ENCODE measurements at regions of chr4 and their contacts with region 1.

Region 1: GRCh38 chr4:55866973-55867574 is 13.6 kb downstream of the EXOC1 start:
- DNase-seq: peak in 5 of 9 experiments; percentile 14 to 74 (median 32)
- ATAC-seq: peak; percentile 87
- H3K4me3 ChIP-seq: no peak overlapping the region
- H3K4me3 Mint-ChIP-seq: no peak overlapping the region
- H3K27ac ChIP-seq: no peak overlapping the region
- H3K27ac Mint-ChIP-seq: no peak overlapping the region
- H3K4me1 ChIP-seq: no peaks in the 10 kb centered on the region
- H3K4me1 Mint-ChIP-seq: peaks cover 9% of the 10 kb centered on the region
- H3K27me3 ChIP-seq: no peaks in the 10 kb centered on the region
- H3K27me3 Mint-ChIP-seq: no peaks in the 10 kb centered on the region
- CTCF ChIP-seq: peak; percentile 92

Region 2: GRCh38 chr4:54971474-54971950 is 895.6 kb before region 1 on chr4:
- CTCF ChIA-PET with region 1: interaction called, 3 read pairs
- POLR2A ChIA-PET with region 1: no interaction called
- intact Hi-C with region 1: loop called in 1 of 2 experiments (anchors 10 kb)
- DNase-seq: peak in 2 of 9 experiments; percentile 21 to 44
- ATAC-seq: peak; percentile 51
- H3K4me3 ChIP-seq: no peak overlapping the region
- H3K4me3 Mint-ChIP-seq: no peak overlapping the region
- H3K27ac ChIP-seq: no peak overlapping the region
- H3K27ac Mint-ChIP-seq: no peak overlapping the region
- H3K4me1 ChIP-seq: no peaks in the 10 kb centered on the region
- H3K4me1 Mint-ChIP-seq: no peaks in the 10 kb centered on the region
- H3K27me3 ChIP-seq: no peaks in the 10 kb centered on the region
- H3K27me3 Mint-ChIP-seq: peaks cover 12% of the 10 kb centered on the region
- CTCF ChIP-seq: peak; percentile 63

Region 3: GRCh38 chr4:55312489-55313101 is 554.5 kb before region 1 on chr4:
- CTCF ChIA-PET with region 1: interaction called, 3 read pairs
- POLR2A ChIA-PET with region 1: no interaction called
- intact Hi-C with region 1: loop called (anchors 1 kb)
- DNase-seq: peak in 6 of 9 experiments; percentile 5 to 64 (median 33)
- ATAC-seq: peak; percentile 54
- H3K4me3 ChIP-seq: no peak overlapping the region
- H3K4me3 Mint-ChIP-seq: no peak overlapping the region
- H3K27ac ChIP-seq: no peak overlapping the region
- H3K27ac Mint-ChIP-seq: no peak overlapping the region
- H3K4me1 ChIP-seq: no peaks in the 10 kb centered on the region
- H3K4me1 Mint-ChIP-seq: no peaks in the 10 kb centered on the region
- H3K27me3 ChIP-seq: no peaks in the 10 kb centered on the region
- H3K27me3 Mint-ChIP-seq: peaks cover 3% of the 10 kb centered on the region
- CTCF ChIP-seq: peak; percentile 63

Region 4: DNA sequence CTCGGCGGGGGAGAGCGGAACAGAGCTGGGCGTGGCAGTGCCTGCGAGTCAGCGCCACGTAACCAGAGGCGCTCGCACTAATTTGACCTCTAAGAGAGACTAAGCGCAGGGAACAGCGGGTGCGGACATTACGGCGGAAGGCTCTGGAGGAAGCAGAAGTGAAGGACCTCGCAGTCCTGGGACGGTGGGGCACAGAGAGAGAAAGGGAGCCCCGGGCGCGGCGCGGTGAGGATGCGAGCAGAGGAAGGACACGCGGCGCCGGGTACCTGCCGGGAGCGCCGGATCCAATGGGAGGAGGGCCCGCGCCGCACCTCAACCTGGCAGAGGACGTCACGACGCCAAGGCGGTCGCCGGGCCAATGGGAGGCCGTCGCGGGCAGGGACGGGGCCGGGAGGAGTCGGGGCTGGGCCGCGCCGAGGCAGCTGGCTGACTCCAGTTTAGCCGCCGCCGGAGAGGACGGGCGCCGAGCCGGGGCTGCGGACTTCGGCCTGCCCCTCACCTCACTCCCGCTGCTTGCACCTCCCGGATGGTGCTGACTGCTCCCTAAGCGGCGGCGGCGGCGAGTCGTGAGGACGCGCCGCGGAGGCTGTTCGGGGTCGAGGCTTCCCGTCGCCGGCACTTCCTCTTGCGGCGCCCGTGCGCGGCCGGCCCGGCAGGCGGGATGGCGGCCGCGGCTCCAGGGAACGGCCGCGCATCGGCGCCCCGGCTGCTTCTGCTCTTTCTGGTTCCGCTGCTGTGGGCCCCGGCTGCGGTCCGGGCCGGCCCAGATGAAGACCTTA is 471.4 kb before region 1 on chr4 and contains the start of gene TMEM165:
- CTCF ChIA-PET with region 1: no interaction called
- POLR2A ChIA-PET with region 1: interaction called, 4 read pairs
- intact Hi-C with region 1: loop called in 1 of 2 experiments (anchors 2 kb)
- DNase-seq: peak; percentile 72 to 93 (median 86)
- ATAC-seq: peak; percentile 94
- H3K4me3 ChIP-seq: peak within 1 kb of the TSS; percentile 68 to 74
- H3K4me3 Mint-ChIP-seq: peak within 1 kb of the TSS; percentile 97
- H3K27ac ChIP-seq: peak within 1 kb of the TSS; percentile 83 to 93
- H3K27ac Mint-ChIP-seq: peak within 1 kb of the TSS; percentile 98
- H3K4me1 ChIP-seq: peaks cover 36% of the 10 kb centered on the region
- H3K4me1 Mint-ChIP-seq: peaks cover 38% of the 10 kb centered on the region
- H3K27me3 ChIP-seq: no peaks in the 10 kb centered on the region
- H3K27me3 Mint-ChIP-seq: no peaks in the 10 kb centered on the region
- CTCF ChIP-seq: peak; percentile 0
- total RNA-seq, gene TMEM165: 31.0 to 31.5 TPM

Region 5: GRCh38 chr4:55853484-55854046 is 13.5 kb before region 1 on chr4 and contains the start of gene EXOC1:
- CTCF ChIA-PET with region 1: interaction called, 11 read pairs
- POLR2A ChIA-PET with region 1: no interaction called
- intact Hi-C with region 1: loop called in 1 of 2 experiments (anchors 2 kb)
- DNase-seq: peak; percentile 90 to 98 (median 97)
- ATAC-seq: peak; percentile 96
- H3K4me3 ChIP-seq: peak within 1 kb of the TSS; percentile 96
- H3K4me3 Mint-ChIP-seq: peak within 1 kb of the TSS; percentile 36
- H3K27ac ChIP-seq: peak within 1 kb of the TSS; percentile 70 to 86
- H3K27ac Mint-ChIP-seq: peak within 1 kb of the TSS; percentile 64
- H3K4me1 ChIP-seq: peaks cover 40% of the 10 kb centered on the region
- H3K4me1 Mint-ChIP-seq: peaks cover 38% of the 10 kb centered on the region
- H3K27me3 ChIP-seq: no peaks in the 10 kb centered on the region
- H3K27me3 Mint-ChIP-seq: no peaks in the 10 kb centered on the region
- CTCF ChIP-seq: no peak
- total RNA-seq, gene EXOC1: 12.1 to 14.5 TPM

Measured in CD8-positive, alpha-beta T cell (primary cell).